Endothelial cell of umbilical vein (primary cell): ENCODE measurements at regions of chr7 and their contacts with region 1.

Region 1: DNA sequence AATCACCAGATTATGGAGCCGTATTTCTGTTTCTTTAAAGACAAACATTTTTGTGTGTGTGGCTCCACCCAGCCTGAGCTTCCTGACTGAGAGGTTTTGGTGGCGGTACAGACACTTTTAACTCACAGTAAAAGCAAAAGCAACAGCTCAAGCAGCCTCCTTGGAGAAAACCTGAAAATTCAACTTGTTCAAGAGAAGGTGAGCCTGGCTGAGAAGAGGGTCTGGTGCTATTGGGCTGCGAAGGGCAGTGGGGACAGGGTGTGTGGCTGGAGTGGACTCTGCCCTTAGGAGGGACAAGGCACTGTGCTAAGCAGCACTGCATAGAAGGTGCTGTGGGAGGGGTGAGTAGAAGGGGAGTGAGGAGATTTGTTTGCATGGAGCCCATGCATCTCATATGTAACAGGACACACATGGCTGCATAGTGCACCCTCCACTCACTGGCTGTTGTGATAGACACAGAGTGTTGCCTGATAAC is at the start of gene GIMAP7:
- DNase-seq: peak; percentile 81
- H3K4me3 ChIP-seq: peak within 1 kb of the TSS; percentile 69 to 92 (median 91)
- H3K27ac ChIP-seq: peak within 1 kb of the TSS; percentile 61
- H3K4me1 ChIP-seq: peaks cover 21% of the 10 kb centered on the region
- H3K27me3 ChIP-seq: no peaks in the 10 kb centered on the region
- CTCF ChIP-seq: no peak
- POLR2A ChIP-seq: peak; percentile 81
- total RNA-seq, gene GIMAP7: 42.4 and 51.1 TPM in 2 replicates

Region 2: GRCh38 chr7:150404805-150405583 is 109.8 kb before region 1 on chr7:
- CTCF ChIA-PET with region 1: no interaction called
- POLR2A ChIA-PET with region 1: no interaction called
- dilution Hi-C with region 1: no loop called
- intact Hi-C with region 1: no loop called
- DNase-seq: peak; percentile 87
- H3K4me3 ChIP-seq: peak overlapping the region; percentile 68 to 81 (median 79)
- H3K27ac ChIP-seq: peak overlapping the region; percentile 71
- H3K4me1 ChIP-seq: peaks cover 15% of the 10 kb centered on the region
- H3K27me3 ChIP-seq: no peaks in the 10 kb centered on the region
- CTCF ChIP-seq: peak in 1 of 2 donors; percentile 22
- POLR2A ChIP-seq: peak; percentile 89

Region 3: DNA sequence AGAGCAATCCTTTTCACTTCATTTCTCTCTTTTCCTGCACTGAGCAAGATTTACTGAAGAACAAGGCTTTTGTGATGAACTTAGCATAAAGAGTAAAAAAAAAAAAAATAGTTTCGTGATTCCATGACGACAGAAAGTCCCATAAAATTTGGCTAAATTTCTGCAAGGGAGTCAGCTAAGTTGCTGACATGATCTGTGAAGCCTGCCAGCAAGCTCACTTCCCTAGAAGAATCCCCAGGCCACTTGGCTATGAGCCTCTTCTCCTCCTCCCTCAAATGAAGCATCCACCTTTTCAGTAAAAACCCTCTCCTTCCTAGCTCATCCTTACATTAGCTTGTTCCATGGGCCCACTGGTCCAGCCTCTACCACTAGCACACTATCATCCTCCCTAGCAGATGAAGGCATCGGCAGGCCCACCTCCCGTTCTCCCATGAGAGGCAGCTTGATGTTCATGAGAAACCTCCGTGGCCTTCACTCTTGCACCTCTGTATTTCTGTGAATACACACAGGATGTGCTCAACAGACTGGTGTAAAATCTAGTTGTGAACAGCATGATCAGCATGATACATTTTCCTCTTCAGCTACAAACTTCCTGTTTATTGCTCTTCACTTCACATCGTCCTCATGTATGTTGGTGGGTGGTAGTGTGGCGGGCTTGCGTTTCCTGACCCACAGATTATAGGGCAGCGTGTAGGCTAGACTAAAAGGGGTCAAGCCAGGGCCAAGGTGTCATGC is 33.4 kb before region 1 on chr7:
- CTCF ChIA-PET with region 1: interaction called, 7 read pairs
- POLR2A ChIA-PET with region 1: interaction called, 4 read pairs
- dilution Hi-C with region 1: no loop called
- intact Hi-C with region 1: loop called (anchors 1 kb)
- DNase-seq: no peak
- H3K4me3 ChIP-seq: no peak overlapping the region
- H3K27ac ChIP-seq: no peak overlapping the region
- H3K4me1 ChIP-seq: peaks cover 15% of the 10 kb centered on the region
- H3K27me3 ChIP-seq: no peaks in the 10 kb centered on the region
- CTCF ChIP-seq: no peak
- POLR2A ChIP-seq: no peak

Region 4: DNA sequence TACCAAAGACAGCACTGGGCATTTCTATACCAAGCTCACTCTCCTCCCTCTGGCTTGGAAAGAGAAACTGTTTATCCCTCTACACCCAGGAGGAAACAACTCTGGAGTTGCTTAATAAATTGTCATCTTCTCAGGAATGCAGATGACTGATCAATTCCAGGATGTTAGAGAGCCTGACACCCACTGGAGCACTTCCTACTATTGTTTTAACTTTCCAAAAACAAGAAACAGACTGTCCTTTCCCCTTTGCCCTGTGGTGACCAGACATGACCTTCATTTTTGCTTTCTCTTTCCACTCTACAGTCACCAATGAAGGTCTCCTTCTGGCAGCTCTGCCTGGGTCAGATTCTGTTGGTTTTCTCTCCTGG is 72.0 kb after region 1 on chr7:
- CTCF ChIA-PET with region 1: interaction called, 7 read pairs
- POLR2A ChIA-PET with region 1: interaction called, 4 read pairs
- dilution Hi-C with region 1: no loop called
- intact Hi-C with region 1: loop called (anchors 1 kb)
- DNase-seq: peak; percentile 96
- H3K4me3 ChIP-seq: peak overlapping the region in 1 of 3 experiments; percentile 24
- H3K27ac ChIP-seq: peak overlapping the region; percentile 93
- H3K4me1 ChIP-seq: peaks cover 34% of the 10 kb centered on the region
- H3K27me3 ChIP-seq: no peaks in the 10 kb centered on the region
- CTCF ChIP-seq: no peak
- POLR2A ChIP-seq: no peak

Region 5: GRCh38 chr7:150716368-150716767 is 201.6 kb after region 1 on chr7 and contains the start of gene GIMAP1:
- CTCF ChIA-PET with region 1: no interaction called
- POLR2A ChIA-PET with region 1: no interaction called
- dilution Hi-C with region 1: no loop called
- intact Hi-C with region 1: loop called (anchors 2 kb)
- DNase-seq: peak; percentile 88
- H3K4me3 ChIP-seq: peak within 1 kb of the TSS; percentile 61 to 84 (median 78)
- H3K27ac ChIP-seq: peak within 1 kb of the TSS; percentile 39
- H3K4me1 ChIP-seq: peaks cover 18% of the 10 kb centered on the region
- H3K27me3 ChIP-seq: no peaks in the 10 kb centered on the region
- CTCF ChIP-seq: no peak
- POLR2A ChIP-seq: peak; percentile 97
- total RNA-seq, gene GIMAP1: 11.8 and 11.9 TPM in 2 replicates